ENCODE measurements at regions of chr17 and their contacts with region 1.

Region 1: DNA sequence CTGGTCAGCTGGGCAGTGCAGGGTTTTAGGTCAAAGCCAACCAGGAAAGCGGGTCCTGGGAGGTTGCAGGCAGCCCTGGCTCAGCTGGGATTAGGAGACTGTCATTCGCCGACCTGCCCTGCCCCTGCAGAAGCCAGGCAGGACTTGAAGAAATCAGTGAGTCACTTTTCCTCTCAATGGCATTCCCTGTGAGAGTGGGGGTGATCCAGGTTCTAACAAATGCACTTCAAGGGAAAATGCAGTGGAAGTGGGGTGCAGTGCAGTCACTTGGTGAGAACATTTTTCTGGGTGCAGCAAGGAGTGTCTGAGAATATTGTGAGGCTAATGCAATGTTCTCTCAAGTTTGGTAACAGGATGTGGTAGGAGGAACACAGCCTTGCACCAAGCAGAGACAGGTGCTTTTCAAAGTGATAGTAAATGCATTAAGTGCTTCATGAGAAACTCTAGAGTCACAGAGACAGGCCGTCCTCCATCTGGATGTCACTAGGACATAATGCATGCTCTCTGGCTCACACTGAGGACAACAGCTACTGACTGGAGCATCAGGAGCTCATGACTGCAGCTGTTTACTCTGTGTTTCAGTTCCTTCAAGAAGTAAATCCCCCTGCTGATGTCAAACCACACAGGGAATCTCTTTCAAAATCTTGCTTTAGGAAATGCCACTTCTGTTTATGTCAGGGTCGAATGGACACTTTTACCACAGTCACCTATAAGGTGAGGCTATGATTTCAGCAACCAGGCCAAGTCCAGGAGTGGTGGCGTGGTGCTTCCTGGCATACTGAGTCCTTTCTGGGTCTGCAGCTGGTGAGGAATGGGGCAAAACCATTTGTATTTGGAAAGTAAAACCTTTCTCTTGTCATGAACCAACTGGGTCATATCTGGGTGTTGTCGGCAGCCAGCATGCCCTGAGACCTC is 16.7 kb downstream of the CDK5R1 start:
- DNase-seq: peak; percentile 91
- H3K4me3 ChIP-seq: peak overlapping the region; percentile 37
- H3K27ac ChIP-seq: peak overlapping the region; percentile 83
- H3K4me1 ChIP-seq: peaks cover 26% of the 10 kb centered on the region
- CTCF ChIP-seq: no peak

Region 2: DNA sequence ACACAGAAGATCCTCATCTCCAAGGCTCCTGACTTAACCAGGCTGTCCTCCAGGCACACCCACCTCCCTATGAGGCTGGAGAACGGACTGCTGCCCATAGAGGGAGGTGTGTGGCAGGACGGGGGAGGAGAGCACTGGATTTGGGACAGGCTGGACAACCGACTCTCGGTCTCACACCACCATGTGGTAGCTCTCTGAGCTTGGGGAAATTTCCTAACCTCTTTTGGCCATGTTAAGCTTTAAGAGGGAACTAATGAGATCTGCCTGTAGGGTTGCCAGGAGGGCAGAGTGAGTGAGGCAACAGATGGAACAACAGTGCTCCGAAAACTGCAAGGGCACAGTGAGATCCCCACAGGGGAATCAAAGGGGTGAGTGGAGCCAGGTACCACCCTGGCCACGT is 205.2 kb before region 1 on chr17:
- CTCF ChIA-PET with region 1: no interaction called
- POLR2A ChIA-PET with region 1: no interaction called
- intact Hi-C with region 1: no loop called
- DNase-seq: no peak
- H3K4me3 ChIP-seq: no peak overlapping the region
- H3K27ac ChIP-seq: no peak overlapping the region
- H3K4me1 ChIP-seq: peaks cover 20% of the 10 kb centered on the region
- CTCF ChIP-seq: no peak

Region 3: GRCh38 chr17:32426894-32427293 is 76.6 kb before region 1 on chr17:
- CTCF ChIA-PET with region 1: no interaction called
- POLR2A ChIA-PET with region 1: no interaction called
- intact Hi-C with region 1: no loop called
- DNase-seq: no peak
- H3K4me3 ChIP-seq: no peak overlapping the region
- H3K27ac ChIP-seq: no peak overlapping the region
- H3K4me1 ChIP-seq: no peaks in the 10 kb centered on the region
- CTCF ChIP-seq: no peak

Region 4: GRCh38 chr17:32519228-32520103 is 16.0 kb after region 1 on chr17:
- CTCF ChIA-PET with region 1: no interaction called
- POLR2A ChIA-PET with region 1: no interaction called
- intact Hi-C with region 1: loop called (anchors 1 kb)
- DNase-seq: no peak
- H3K4me3 ChIP-seq: peak overlapping the region; percentile 29
- H3K27ac ChIP-seq: no peak overlapping the region
- H3K4me1 ChIP-seq: peaks cover 46% of the 10 kb centered on the region
- CTCF ChIP-seq: no peak

Region 5: GRCh38 chr17:32558997-32559650 is 55.6 kb after region 1 on chr17:
- CTCF ChIA-PET with region 1: no interaction called
- POLR2A ChIA-PET with region 1: interaction called, 5 read pairs
- intact Hi-C with region 1: loop called (anchors 5 kb)
- DNase-seq: peak; percentile 63
- H3K4me3 ChIP-seq: peak overlapping the region; percentile 30
- H3K27ac ChIP-seq: peak overlapping the region; percentile 49
- H3K4me1 ChIP-seq: peaks cover 42% of the 10 kb centered on the region
- CTCF ChIP-seq: no peak

Measured in OCI-LY7 (cell line).